ENCODE measurements at regions of chr1 and their contacts with region 1.

Region 1: GRCh38 chr1:119968068-119968492 is 71.8 kb upstream of the ADAM30 start:
- DNase-seq: peak; percentile 31
- ATAC-seq: peak; percentile 99
- H3K4me3 ChIP-seq: no peak overlapping the region
- H3K27ac ChIP-seq: no peak overlapping the region
- H3K4me1 ChIP-seq: no peaks in the 10 kb centered on the region
- H3K27me3 ChIP-seq: no peaks in the 10 kb centered on the region; a peak in 1 of 4 replicates
- CTCF ChIP-seq: peak; percentile 65 to 88 (median 76)
- EP300 ChIP-seq: no peak
- POLR2A ChIP-seq: no peak
- RAD21 ChIP-seq: peak; percentile 51

Region 2: GRCh38 chr1:119686649-119687048 is 281.4 kb before region 1 on chr1:
- CTCF ChIA-PET with region 1: no interaction called
- POLR2A ChIA-PET with region 1: no interaction called
- RAD21 ChIA-PET with region 1: no interaction called
- SMC1A ChIA-PET with region 1: no interaction called
- in situ Hi-C with region 1: no loop called
- intact Hi-C with region 1: no loop called
- DNase-seq: no peak
- ATAC-seq: no peak
- H3K4me3 ChIP-seq: no peak overlapping the region
- H3K27ac ChIP-seq: no peak overlapping the region
- H3K4me1 ChIP-seq: no peaks in the 10 kb centered on the region
- H3K27me3 ChIP-seq: 0 out of 4 replicates have a peak, but pooled peaks cover 0 to 2% of the 10 kb centered on the region in 2 experiments
- CTCF ChIP-seq: no peak
- EP300 ChIP-seq: no peak
- POLR2A ChIP-seq: no peak
- RAD21 ChIP-seq: no peak

Region 3: DNA sequence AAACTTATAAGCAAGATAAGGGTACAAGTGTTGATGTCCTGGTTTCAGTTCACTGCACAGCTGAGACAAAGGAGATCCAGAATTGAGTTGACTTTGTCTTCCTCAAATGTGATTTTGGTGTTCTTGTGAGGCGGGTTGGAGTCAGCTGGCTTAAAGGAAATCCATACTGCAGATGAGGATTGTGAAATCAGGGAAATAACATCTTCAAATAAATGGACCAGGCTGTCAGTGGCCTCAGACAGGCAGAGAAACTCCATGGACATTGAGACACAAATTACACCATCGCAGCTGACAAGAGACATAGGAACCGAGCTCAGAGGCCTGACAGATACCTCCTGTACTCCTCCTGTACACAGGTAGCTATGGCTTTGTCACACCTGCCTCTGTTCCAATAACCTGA is 129.8 kb before region 1 on chr1:
- CTCF ChIA-PET with region 1: no interaction called
- POLR2A ChIA-PET with region 1: no interaction called
- RAD21 ChIA-PET with region 1: no interaction called
- SMC1A ChIA-PET with region 1: no interaction called
- in situ Hi-C with region 1: no loop called
- intact Hi-C with region 1: no loop called
- DNase-seq: no peak
- ATAC-seq: no peak
- H3K4me3 ChIP-seq: no peak overlapping the region
- H3K27ac ChIP-seq: no peak overlapping the region
- H3K4me1 ChIP-seq: no peaks in the 10 kb centered on the region
- H3K27me3 ChIP-seq: no peaks in the 10 kb centered on the region; a peak in 1 of 4 replicates
- CTCF ChIP-seq: no peak
- EP300 ChIP-seq: no peak
- POLR2A ChIP-seq: no peak
- RAD21 ChIP-seq: no peak

Region 4: GRCh38 chr1:119885903-119886783 is 81.9 kb before region 1 on chr1:
- CTCF ChIA-PET with region 1: no interaction called
- POLR2A ChIA-PET with region 1: no interaction called
- RAD21 ChIA-PET with region 1: no interaction called
- SMC1A ChIA-PET with region 1: no interaction called
- in situ Hi-C with region 1: no loop called
- intact Hi-C with region 1: loop called (anchors 5 kb)
- DNase-seq: no peak
- ATAC-seq: peak; percentile 88
- H3K4me3 ChIP-seq: no peak overlapping the region
- H3K27ac ChIP-seq: no peak overlapping the region
- H3K4me1 ChIP-seq: no peaks in the 10 kb centered on the region
- H3K27me3 ChIP-seq: no peaks in the 10 kb centered on the region; a peak in 2 of 4 replicates
- CTCF ChIP-seq: peak; percentile 61 to 74 (median 67)
- EP300 ChIP-seq: no peak
- POLR2A ChIP-seq: no peak
- RAD21 ChIP-seq: peak; percentile 48

Region 5: GRCh38 chr1:119948342-119949214 is 19.5 kb before region 1 on chr1:
- CTCF ChIA-PET with region 1: interaction called, 24 read pairs
- POLR2A ChIA-PET with region 1: no interaction called
- RAD21 ChIA-PET with region 1: interaction called, 3 read pairs
- SMC1A ChIA-PET with region 1: interaction called, 3 read pairs
- in situ Hi-C with region 1: no loop called
- intact Hi-C with region 1: no loop called
- DNase-seq: peak; percentile 15
- ATAC-seq: peak; percentile 97
- H3K4me3 ChIP-seq: no peak overlapping the region
- H3K27ac ChIP-seq: no peak overlapping the region
- H3K4me1 ChIP-seq: no peaks in the 10 kb centered on the region
- H3K27me3 ChIP-seq: no peaks in the 10 kb centered on the region
- CTCF ChIP-seq: peak; percentile 92 to 95 (median 93); a peak in 5 of 6 replicates
- EP300 ChIP-seq: no peak
- POLR2A ChIP-seq: no peak
- RAD21 ChIP-seq: peak; percentile 92